IMR-90 (cell line): ENCODE measurements at regions of chr2 and their contacts with region 1.

Region 1: DNA sequence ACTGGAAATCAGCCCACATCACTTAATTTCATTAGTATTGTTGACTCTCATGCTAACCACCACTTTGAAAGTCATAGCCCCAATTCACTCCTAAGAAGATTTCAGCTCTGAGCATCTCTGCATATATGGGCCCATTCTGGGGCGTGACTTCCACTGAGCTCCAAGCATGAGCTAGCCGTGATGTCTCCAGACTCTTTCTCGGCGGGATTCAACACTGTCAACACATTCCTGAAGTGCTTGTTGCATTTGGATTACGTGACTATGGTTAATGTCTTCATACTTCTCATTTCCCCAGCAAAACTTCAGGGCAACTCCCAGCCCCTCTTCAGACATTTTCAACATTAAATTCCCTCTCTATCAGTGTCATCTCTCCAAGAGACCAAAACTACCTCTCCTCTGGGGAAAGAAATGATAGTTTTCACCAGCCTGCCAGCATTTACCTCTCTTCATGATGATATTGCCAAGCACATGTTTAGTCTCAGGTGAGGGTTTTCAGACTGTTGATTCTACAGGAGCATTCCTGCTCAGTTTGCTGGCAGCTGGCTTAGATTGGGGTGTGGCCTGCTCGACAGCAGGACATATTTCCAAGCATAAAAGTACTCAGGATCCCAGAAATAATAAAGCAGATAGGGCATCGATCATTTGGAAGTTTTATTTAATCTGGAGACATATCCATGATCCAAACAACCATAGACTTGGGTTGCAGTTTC is 81.7 kb downstream of the FEZ2 start:
- DNase-seq: peak; percentile 58
- ATAC-seq: peak; percentile 51
- H3K4me3 ChIP-seq: no peak overlapping the region
- H3K27ac ChIP-seq: no peak overlapping the region
- H3K4me1 ChIP-seq: no peaks in the 10 kb centered on the region; the same call in 1 of the 2 replicates
- H3K27me3 ChIP-seq: no peaks in the 10 kb centered on the region
- CTCF ChIP-seq: no peak
- POLR2A ChIP-seq: no peak
- RAD21 ChIP-seq: no peak

Region 2: GRCh38 chr2:36478332-36478738 is 38.0 kb before region 1 on chr2:
- CTCF ChIA-PET with region 1: no interaction called
- POLR2A ChIA-PET with region 1: no interaction called
- dilution Hi-C with region 1: no loop called
- in situ Hi-C with region 1: no loop called
- intact Hi-C with region 1: no loop called
- DNase-seq: peak; percentile 96
- ATAC-seq: peak; percentile 75
- H3K4me3 ChIP-seq: no peak overlapping the region
- H3K27ac ChIP-seq: peak overlapping the region; percentile 21; the same call in 1 of the 2 replicates
- H3K4me1 ChIP-seq: peaks cover 27% of the 10 kb centered on the region
- H3K27me3 ChIP-seq: no peaks in the 10 kb centered on the region
- CTCF ChIP-seq: no peak
- POLR2A ChIP-seq: no peak
- RAD21 ChIP-seq: no peak

Region 3: DNA sequence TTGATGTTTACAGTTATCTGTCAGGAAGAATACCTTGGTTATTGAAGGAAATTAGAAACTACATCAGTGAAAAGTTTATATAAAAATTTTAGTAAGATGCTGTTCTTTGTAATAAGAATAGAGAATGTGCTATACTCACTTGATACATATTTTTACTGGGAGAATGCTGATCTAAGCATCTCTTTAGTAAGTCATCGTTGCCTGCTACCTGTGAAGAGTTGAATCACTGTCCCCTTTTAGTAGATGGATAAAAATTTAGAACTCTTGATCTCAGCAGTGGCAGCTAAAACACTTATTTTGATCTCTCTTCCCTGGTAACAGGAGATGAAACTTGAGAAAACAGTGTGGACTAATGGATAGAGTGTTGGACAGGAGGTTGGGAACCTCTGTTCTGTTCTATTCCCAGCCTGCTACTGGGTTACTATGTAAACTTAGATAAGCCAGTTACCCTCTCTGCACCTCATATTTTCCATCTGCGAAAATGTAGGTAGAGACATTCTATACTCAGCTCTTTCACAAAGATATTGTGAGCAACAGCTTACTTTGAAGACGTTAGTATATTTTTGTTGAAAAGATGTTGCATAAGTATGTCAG is 18.6 kb before region 1 on chr2:
- CTCF ChIA-PET with region 1: no interaction called
- POLR2A ChIA-PET with region 1: no interaction called
- dilution Hi-C with region 1: no loop called
- in situ Hi-C with region 1: no loop called
- intact Hi-C with region 1: loop called (anchors 2 kb)
- DNase-seq: peak; percentile 48
- ATAC-seq: peak; percentile 43; the same call in 1 of the 2 replicates
- H3K4me3 ChIP-seq: no peak overlapping the region
- H3K27ac ChIP-seq: no peak overlapping the region
- H3K4me1 ChIP-seq: peaks cover 7% of the 10 kb centered on the region
- H3K27me3 ChIP-seq: no peaks in the 10 kb centered on the region
- CTCF ChIP-seq: no peak
- POLR2A ChIP-seq: no peak
- RAD21 ChIP-seq: no peak

Region 4: GRCh38 chr2:36672199-36672598 is 155.9 kb after region 1 on chr2:
- CTCF ChIA-PET with region 1: no interaction called
- POLR2A ChIA-PET with region 1: no interaction called
- dilution Hi-C with region 1: no loop called
- in situ Hi-C with region 1: loop called (anchors 10 kb)
- intact Hi-C with region 1: loop called (anchors 5 kb)
- DNase-seq: peak; percentile 69
- ATAC-seq: peak; percentile 69
- H3K4me3 ChIP-seq: no peak overlapping the region
- H3K27ac ChIP-seq: no peak overlapping the region
- H3K4me1 ChIP-seq: peaks cover 7% of the 10 kb centered on the region; the same call in 1 of the 2 replicates
- H3K27me3 ChIP-seq: no peaks in the 10 kb centered on the region
- CTCF ChIP-seq: peak; percentile 73
- POLR2A ChIP-seq: no peak; the same call in 1 of the 2 replicates
- RAD21 ChIP-seq: peak; percentile 84